ENCODE measurements at regions of chr16 and their contacts with region 1.

Region 1: GRCh38 chr16:4580245-4580644 is 24.1 kb downstream of the C16orf96 start:
- DNase-seq: no peak
- H3K4me3 ChIP-seq: no peak overlapping the region
- H3K27ac ChIP-seq: no peak overlapping the region
- H3K4me1 ChIP-seq: no peaks in the 10 kb centered on the region
- H3K27me3 ChIP-seq: no peaks in the 10 kb centered on the region
- CTCF ChIP-seq: no peak
- POLR2A ChIP-seq: no peak

Region 2: GRCh38 chr16:4506450-4506849 is 73.8 kb before region 1 on chr16:
- CTCF ChIA-PET with region 1: interaction called, 48 read pairs
- POLR2A ChIA-PET with region 1: no interaction called
- dilution Hi-C with region 1: no loop called
- intact Hi-C with region 1: loop called (anchors 1 kb)
- DNase-seq: peak; percentile 77
- H3K4me3 ChIP-seq: no peak overlapping the region
- H3K27ac ChIP-seq: no peak overlapping the region
- H3K4me1 ChIP-seq: peaks cover 5% of the 10 kb centered on the region
- H3K27me3 ChIP-seq: no peaks in the 10 kb centered on the region
- CTCF ChIP-seq: peak; percentile 83 to 85
- POLR2A ChIP-seq: no peak

Region 3: GRCh38 chr16:4517812-4518680 is 62.2 kb before region 1 on chr16:
- CTCF ChIA-PET with region 1: interaction called, 19 read pairs
- POLR2A ChIA-PET with region 1: no interaction called
- dilution Hi-C with region 1: no loop called
- intact Hi-C with region 1: loop called (anchors 1 kb)
- DNase-seq: peak; percentile 66
- H3K4me3 ChIP-seq: no peak overlapping the region
- H3K27ac ChIP-seq: no peak overlapping the region
- H3K4me1 ChIP-seq: peaks cover 22% of the 10 kb centered on the region
- H3K27me3 ChIP-seq: no peaks in the 10 kb centered on the region
- CTCF ChIP-seq: peak; percentile 64 to 76
- POLR2A ChIP-seq: no peak

Region 4: GRCh38 chr16:4675864-4676786 is 95.9 kb after region 1 on chr16:
- CTCF ChIA-PET with region 1: no interaction called
- POLR2A ChIA-PET with region 1: no interaction called
- dilution Hi-C with region 1: no loop called
- intact Hi-C with region 1: no loop called
- DNase-seq: no peak
- H3K4me3 ChIP-seq: no peak overlapping the region
- H3K27ac ChIP-seq: no peak overlapping the region
- H3K4me1 ChIP-seq: no peaks in the 10 kb centered on the region
- H3K27me3 ChIP-seq: no peaks in the 10 kb centered on the region
- CTCF ChIP-seq: no peak
- POLR2A ChIP-seq: no peak